ENCODE measurements at regions of chr13 and their contacts with region 1.

Region 1: DNA sequence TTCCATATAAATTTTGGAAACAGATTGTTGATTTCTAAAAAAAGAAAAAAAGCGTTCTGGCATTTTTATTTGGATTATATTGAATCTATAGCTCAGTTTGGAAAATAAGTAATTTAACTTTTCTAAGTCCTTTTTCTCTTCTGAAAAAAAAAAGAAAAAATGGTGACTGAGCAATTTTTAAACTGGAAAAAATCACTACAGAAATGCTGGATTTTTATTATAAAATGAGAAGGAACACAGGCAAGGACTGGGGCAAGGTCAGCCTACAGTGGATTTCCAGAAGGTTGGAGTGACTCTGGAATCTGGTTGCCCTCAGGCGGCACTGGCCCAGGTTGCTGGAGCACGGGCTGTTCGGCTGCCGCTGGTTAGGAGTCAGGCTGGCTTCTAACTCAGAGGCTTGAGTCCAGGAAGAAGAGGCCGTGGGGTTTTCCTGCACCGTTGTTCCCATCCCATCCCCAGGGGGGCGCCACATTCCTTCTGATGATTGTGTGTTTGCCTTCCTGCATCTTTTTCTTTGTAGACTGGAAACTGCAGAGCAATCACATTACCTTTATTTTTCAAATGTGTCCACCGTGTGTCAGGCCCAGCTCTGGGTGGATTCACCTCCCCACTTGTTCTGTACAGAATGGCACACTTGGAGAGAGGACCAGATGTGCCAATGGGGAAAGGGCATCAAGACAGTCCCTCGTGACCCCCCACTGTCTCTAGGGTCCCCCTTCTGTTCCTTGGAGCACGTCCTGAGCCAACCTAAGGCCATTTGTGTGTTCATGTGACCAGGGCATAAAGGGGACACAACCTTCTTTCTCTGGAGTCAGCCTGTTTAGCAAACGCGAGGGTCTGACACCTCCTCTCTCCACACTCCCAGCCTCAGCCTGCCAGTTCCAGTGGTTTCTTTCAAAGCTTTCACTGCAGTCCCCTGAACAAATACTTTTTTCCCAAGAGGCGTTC is 44.5 kb upstream of the GTF3A start:
- DNase-seq: peak; percentile 60
- ATAC-seq: peak; percentile 69
- H3K4me3 ChIP-seq: peak overlapping the region in 2 of 3 experiments; percentile 45; a peak in 4 of 6 replicates
- H3K27ac ChIP-seq: no peak overlapping the region
- H3K4me1 ChIP-seq: peaks cover 68% of the 10 kb centered on the region
- H3K27me3 ChIP-seq: no peaks in the 10 kb centered on the region
- CTCF ChIP-seq: peak; percentile 89
- EP300 ChIP-seq: no peak
- POLR2A ChIP-seq: no peak
- RAD21 ChIP-seq: peak; percentile 78

Region 2: DNA sequence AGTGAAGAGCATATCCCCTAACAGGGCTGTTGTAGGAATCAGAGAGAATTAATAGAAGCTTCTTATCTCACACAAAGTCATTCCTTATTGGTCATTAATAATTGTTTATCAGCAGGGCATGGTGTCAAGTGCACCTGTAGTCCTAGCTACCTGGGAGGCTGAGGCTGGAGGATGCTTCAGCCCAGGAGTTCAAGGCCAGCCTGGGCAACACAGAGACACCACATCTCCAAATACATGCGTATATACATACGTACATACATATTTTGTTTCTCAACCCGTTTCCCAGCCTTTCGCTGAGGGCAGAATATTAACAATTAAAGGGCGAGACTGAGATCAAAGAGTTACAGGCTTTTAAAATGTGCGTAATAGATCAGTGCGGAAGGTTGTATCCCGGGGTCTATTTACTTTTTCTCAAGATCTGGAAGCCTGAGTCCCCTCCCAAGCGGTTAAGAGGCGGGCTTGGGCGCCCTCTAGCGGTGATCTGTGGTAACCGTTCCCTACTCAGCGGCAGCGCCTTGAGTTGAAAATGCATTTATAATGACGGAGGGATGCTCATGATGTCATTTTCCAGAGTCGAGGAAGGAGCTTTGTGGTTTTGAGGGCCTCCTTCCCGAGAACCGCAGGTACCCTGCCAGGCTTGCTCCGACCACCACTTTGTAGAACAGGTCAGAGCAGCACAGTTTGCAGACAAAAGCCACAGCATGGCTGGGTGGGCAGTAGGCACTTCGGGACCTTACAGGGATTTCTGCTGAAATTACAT is 449.8 kb before region 1 on chr13:
- CTCF ChIA-PET with region 1: no interaction called
- POLR2A ChIA-PET with region 1: no interaction called
- in situ Hi-C with region 1: no loop called
- intact Hi-C with region 1: no loop called
- DNase-seq: peak; percentile 39
- ATAC-seq: peak; percentile 86
- H3K4me3 ChIP-seq: no peak overlapping the region
- H3K27ac ChIP-seq: no peak overlapping the region
- H3K4me1 ChIP-seq: peaks cover 8% of the 10 kb centered on the region; the same call in 1 of the 2 replicates
- H3K27me3 ChIP-seq: peaks cover 1 to 30% of the 10 kb centered on the region in 2 experiments; a peak in 3 of 5 replicates
- CTCF ChIP-seq: peak; percentile 83
- EP300 ChIP-seq: no peak
- POLR2A ChIP-seq: no peak
- RAD21 ChIP-seq: peak; percentile 49; the same call in 1 of the 2 replicates

Region 3: DNA sequence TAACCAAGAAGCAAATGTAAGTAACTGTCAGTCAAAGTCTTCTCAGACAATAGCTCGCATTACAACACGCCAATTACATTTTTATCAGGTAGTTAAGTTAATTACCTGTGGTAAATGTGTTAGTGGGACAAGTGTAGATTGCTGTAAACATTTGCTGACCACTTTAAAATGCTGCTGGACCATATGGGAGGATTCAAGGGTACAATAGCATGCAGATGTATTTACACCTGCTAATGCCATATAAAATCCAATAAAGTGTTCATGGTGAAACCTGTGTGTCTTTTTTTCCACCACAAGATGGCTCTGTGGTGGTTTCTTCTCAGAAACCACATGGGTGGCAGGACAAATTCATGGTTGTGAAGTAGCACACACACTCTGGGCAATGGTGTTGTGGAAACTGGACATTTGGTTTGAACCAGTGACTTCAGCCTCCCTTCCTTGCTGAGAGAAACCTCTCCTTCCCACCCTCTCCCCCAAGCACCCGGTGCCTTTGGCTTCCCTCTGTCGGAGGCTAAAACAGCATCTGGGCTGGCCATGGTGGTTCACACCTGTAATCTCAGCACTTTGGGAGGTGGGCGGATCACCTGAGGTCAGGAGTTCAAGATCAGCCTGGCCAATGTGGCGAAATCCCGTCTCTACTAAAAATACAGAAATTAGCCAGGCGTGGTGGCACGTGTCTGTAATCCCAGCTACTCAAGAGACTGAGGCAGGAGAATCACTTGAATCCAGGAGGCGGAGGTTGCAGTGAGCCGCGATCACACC is 26.4 kb after region 1 on chr13:
- CTCF ChIA-PET with region 1: interaction called, 4 read pairs
- POLR2A ChIA-PET with region 1: interaction called, 21 read pairs
- in situ Hi-C with region 1: no loop called
- intact Hi-C with region 1: loop called (anchors 1 kb)
- DNase-seq: peak; percentile 43
- ATAC-seq: no peak
- H3K4me3 ChIP-seq: no peak overlapping the region
- H3K27ac ChIP-seq: no peak overlapping the region
- H3K4me1 ChIP-seq: peaks cover 59% of the 10 kb centered on the region
- H3K27me3 ChIP-seq: no peaks in the 10 kb centered on the region
- CTCF ChIP-seq: peak; percentile 64
- EP300 ChIP-seq: no peak
- POLR2A ChIP-seq: no peak
- RAD21 ChIP-seq: peak; percentile 35; the same call in 1 of the 2 replicates

Region 4: GRCh38 chr13:27449936-27450828 is 70.2 kb after region 1 on chr13 and contains the start of gene MTIF3:
- CTCF ChIA-PET with region 1: no interaction called
- POLR2A ChIA-PET with region 1: interaction called, 14 read pairs
- in situ Hi-C with region 1: no loop called
- intact Hi-C with region 1: loop called (anchors 1 kb)
- DNase-seq: peak; percentile 94
- ATAC-seq: peak; percentile 96
- H3K4me3 ChIP-seq: peak within 1 kb of the TSS; percentile 67 to 89 (median 74)
- H3K27ac ChIP-seq: peak within 1 kb of the TSS; percentile 95
- H3K4me1 ChIP-seq: peaks cover 36% of the 10 kb centered on the region
- H3K27me3 ChIP-seq: no peaks in the 10 kb centered on the region; a peak in 1 of 5 replicates
- CTCF ChIP-seq: peak; percentile 40
- EP300 ChIP-seq: 0 out of 4 replicates have a peak, but pooled peaks of 1 of the 2 experiments have one; percentile 28
- POLR2A ChIP-seq: peak; percentile 75 to 97
- RAD21 ChIP-seq: no peak
- total RNA-seq, gene MTIF3: 40.6 and 59.2 TPM in 2 replicates

Region 5: DNA sequence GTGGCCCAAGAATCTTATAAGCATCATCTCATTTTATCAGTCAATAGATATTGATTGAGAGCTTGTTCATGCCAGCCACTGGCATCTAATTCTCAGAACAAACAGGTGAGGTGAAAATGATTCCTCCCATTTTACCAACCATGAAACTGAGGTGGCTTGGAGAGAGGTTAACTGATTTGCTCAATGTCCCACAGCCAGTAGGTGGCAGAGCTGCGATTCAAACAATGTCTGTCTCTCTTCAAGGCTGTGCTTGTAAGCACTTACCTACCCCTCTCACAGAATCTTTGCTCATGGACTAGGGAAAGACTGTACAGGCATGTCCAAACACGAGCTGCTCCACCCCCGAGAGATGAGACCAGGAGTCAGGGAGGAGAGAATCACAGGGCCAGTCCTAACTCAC is 390.8 kb after region 1 on chr13:
- CTCF ChIA-PET with region 1: no interaction called
- POLR2A ChIA-PET with region 1: no interaction called
- in situ Hi-C with region 1: no loop called
- intact Hi-C with region 1: loop called (anchors 5 kb)
- DNase-seq: peak; percentile 42
- ATAC-seq: peak; percentile 88
- H3K4me3 ChIP-seq: no peak overlapping the region
- H3K27ac ChIP-seq: no peak overlapping the region
- H3K4me1 ChIP-seq: peaks cover 13% of the 10 kb centered on the region
- H3K27me3 ChIP-seq: no peaks in the 10 kb centered on the region; a peak in 2 of 5 replicates
- CTCF ChIP-seq: peak; percentile 75
- EP300 ChIP-seq: no peak
- POLR2A ChIP-seq: no peak
- RAD21 ChIP-seq: no peak